ENCODE measurements at regions of chr18 and their contacts with region 1.

Region 1: GRCh38 chr18:49021433-49022129 is 70.8 kb upstream of the SMAD7 start:
- DNase-seq: peak; percentile 88
- H3K4me3 ChIP-seq: peak overlapping the region; percentile 43
- H3K27ac ChIP-seq: peak overlapping the region; percentile 95
- H3K4me1 ChIP-seq: peaks cover 73% of the 10 kb centered on the region
- CTCF ChIP-seq: peak; percentile 76

Region 2: GRCh38 chr18:48777026-48777743 is 244.4 kb before region 1 on chr18:
- CTCF ChIA-PET with region 1: interaction called, 3 read pairs
- POLR2A ChIA-PET with region 1: no interaction called
- intact Hi-C with region 1: loop called (anchors 5 kb)
- DNase-seq: peak; percentile 68
- H3K4me3 ChIP-seq: no peak overlapping the region
- H3K27ac ChIP-seq: no peak overlapping the region
- H3K4me1 ChIP-seq: peaks cover 34% of the 10 kb centered on the region
- CTCF ChIP-seq: peak; percentile 86

Region 3: GRCh38 chr18:49055754-49056172 is 34.2 kb after region 1 on chr18:
- CTCF ChIA-PET with region 1: interaction called, 3 read pairs
- POLR2A ChIA-PET with region 1: interaction called, 6 read pairs
- intact Hi-C with region 1: loop called (anchors 1 kb)
- DNase-seq: peak; percentile 68
- H3K4me3 ChIP-seq: no peak overlapping the region
- H3K27ac ChIP-seq: peak overlapping the region; percentile 100
- H3K4me1 ChIP-seq: peaks cover 73% of the 10 kb centered on the region
- CTCF ChIP-seq: no peak

Region 4: GRCh38 chr18:49178736-49179135 is 157.2 kb after region 1 on chr18:
- CTCF ChIA-PET with region 1: no interaction called
- POLR2A ChIA-PET with region 1: no interaction called
- intact Hi-C with region 1: loop called (anchors 1 kb)
- DNase-seq: peak; percentile 13
- H3K4me3 ChIP-seq: no peak overlapping the region
- H3K27ac ChIP-seq: no peak overlapping the region
- H3K4me1 ChIP-seq: peaks cover 46% of the 10 kb centered on the region
- CTCF ChIP-seq: peak; percentile 69

Region 5: DNA sequence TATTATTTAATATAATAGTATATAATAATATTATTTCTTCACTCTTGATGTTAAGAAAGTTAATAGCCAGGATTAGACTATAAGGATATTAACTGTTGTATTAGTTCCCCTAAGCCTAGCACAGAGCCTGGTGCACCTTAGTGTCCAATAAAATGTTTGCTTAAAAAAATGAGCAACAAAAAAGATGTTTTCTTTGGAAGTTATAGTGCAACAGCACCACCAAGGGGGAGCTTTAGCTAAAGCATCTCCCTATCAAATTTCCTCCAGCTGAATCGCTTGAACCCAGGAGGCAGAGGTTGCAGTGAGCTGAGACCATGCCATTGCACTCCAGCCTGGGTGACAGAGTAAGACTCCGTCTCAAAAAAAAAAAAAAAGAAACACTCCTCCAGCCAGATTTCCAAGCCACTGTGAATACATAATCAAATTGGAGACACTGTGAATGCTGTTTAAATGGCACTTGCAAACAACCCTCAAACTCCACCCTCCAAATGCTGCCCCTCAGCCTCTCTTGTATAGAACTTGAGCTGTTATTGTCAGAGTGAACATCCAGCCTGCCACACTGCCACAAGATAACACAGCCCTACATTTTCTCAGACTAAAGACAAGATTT is 217.0 kb after region 1 on chr18:
- CTCF ChIA-PET with region 1: no interaction called
- POLR2A ChIA-PET with region 1: no interaction called
- intact Hi-C with region 1: loop called (anchors 5 kb)
- DNase-seq: peak; percentile 44
- H3K4me3 ChIP-seq: no peak overlapping the region
- H3K27ac ChIP-seq: no peak overlapping the region
- H3K4me1 ChIP-seq: peaks cover 9% of the 10 kb centered on the region
- CTCF ChIP-seq: peak; percentile 69

Region 6: GRCh38 chr18:49447810-49448745 is 426.5 kb after region 1 on chr18:
- CTCF ChIA-PET with region 1: no interaction called
- POLR2A ChIA-PET with region 1: no interaction called
- intact Hi-C with region 1: loop called (anchors 5 kb)
- DNase-seq: peak; percentile 56
- H3K4me3 ChIP-seq: no peak overlapping the region
- H3K27ac ChIP-seq: peak overlapping the region; percentile 15
- H3K4me1 ChIP-seq: peaks cover 29% of the 10 kb centered on the region
- CTCF ChIP-seq: peak; percentile 72